HepG2 (cell line): ENCODE measurements at regions of chr5 and their contacts with region 1.

Region 1: DNA sequence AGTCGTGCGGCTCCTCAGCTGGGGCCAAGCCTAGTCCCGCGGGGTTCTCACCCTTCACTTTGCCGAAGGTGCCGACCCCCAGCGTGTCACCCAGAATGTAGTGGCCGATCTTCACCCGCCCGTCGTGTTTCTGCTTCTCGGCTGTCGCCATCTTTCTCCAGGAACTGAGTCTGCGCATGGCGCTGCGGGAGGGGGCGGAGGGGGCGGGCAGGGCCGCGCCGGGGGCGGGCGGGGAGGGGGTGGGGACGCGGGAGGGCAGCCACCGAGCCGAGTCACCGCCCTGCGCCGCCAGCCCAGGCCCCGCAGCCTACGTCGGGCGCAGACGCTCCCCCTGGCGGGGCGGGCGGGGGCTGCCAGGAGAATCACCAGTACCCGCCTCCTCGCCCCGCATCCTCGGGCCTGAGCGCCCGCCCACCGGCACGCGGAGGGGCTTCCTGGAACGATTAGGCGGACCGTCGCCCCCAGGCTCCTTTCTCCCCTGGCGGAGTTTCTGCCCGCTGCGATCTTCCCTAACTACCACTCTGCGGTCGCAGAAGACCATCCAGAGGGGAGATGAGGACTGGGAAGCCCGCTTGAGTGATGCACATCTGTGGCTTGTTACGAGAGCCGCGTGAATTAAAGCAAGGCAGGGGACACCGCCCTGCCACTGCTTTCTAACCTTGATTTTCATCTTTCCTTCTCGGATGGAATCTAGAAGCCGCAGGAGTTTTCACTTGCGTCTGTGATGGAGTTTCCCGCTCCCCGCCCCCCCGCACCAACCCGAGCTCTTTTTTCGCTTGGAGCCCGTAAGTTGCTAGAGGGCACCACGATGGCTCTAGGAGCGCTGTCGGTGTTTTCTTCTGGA is at the start of gene PRKAA1:
- DNase-seq: peak; percentile 71
- ATAC-seq: peak; percentile 95
- H3K4me3 ChIP-seq: peak within 1 kb of the TSS; percentile 94 to 98 (median 96)
- H3K27ac ChIP-seq: peak within 1 kb of the TSS; percentile 93
- H3K4me1 ChIP-seq: peaks cover 63% of the 10 kb centered on the region
- H3K27me3 ChIP-seq: no peaks in the 10 kb centered on the region; a peak in 1 of 5 replicates
- CTCF ChIP-seq: peak; percentile 80
- EP300 ChIP-seq: peak in 1 of 2 experiments; percentile 24; a peak in 2 of 4 replicates
- POLR2A ChIP-seq: peak; percentile 80 to 86
- RAD21 ChIP-seq: peak; percentile 73; the same call in 1 of the 2 replicates
- total RNA-seq, gene PRKAA1: 58.0 and 78.7 TPM in 2 replicates

Region 2: GRCh38 chr5:40755407-40756365 is 42.5 kb before region 1 on chr5 and contains the start of gene TTC33:
- CTCF ChIA-PET with region 1: interaction called, 19 read pairs
- POLR2A ChIA-PET with region 1: no interaction called
- in situ Hi-C with region 1: no loop called
- intact Hi-C with region 1: loop called (anchors 1 kb)
- DNase-seq: peak; percentile 91
- ATAC-seq: peak; percentile 97
- H3K4me3 ChIP-seq: peak within 1 kb of the TSS; percentile 65 to 94 (median 86)
- H3K27ac ChIP-seq: peak within 1 kb of the TSS; percentile 70
- H3K4me1 ChIP-seq: peaks cover 21% of the 10 kb centered on the region
- H3K27me3 ChIP-seq: no peaks in the 10 kb centered on the region; a peak in 1 of 5 replicates
- CTCF ChIP-seq: peak; percentile 96
- EP300 ChIP-seq: no peak
- POLR2A ChIP-seq: peak; percentile 34 to 37; a peak in 3 of 4 replicates
- RAD21 ChIP-seq: peak; percentile 80
- total RNA-seq, gene TTC33: 20.0 and 37.9 TPM in 2 replicates

Region 3: GRCh38 chr5:40823459-40823858 is 25.2 kb after region 1 on chr5:
- CTCF ChIA-PET with region 1: no interaction called
- POLR2A ChIA-PET with region 1: interaction called, 6 read pairs
- in situ Hi-C with region 1: no loop called
- intact Hi-C with region 1: loop called (anchors 2 kb)
- DNase-seq: no peak
- ATAC-seq: peak; percentile 60
- H3K4me3 ChIP-seq: no peak overlapping the region
- H3K27ac ChIP-seq: no peak overlapping the region
- H3K4me1 ChIP-seq: no peaks in the 10 kb centered on the region
- H3K27me3 ChIP-seq: no peaks in the 10 kb centered on the region
- CTCF ChIP-seq: no peak
- EP300 ChIP-seq: no peak
- POLR2A ChIP-seq: no peak
- RAD21 ChIP-seq: no peak

Region 4: DNA sequence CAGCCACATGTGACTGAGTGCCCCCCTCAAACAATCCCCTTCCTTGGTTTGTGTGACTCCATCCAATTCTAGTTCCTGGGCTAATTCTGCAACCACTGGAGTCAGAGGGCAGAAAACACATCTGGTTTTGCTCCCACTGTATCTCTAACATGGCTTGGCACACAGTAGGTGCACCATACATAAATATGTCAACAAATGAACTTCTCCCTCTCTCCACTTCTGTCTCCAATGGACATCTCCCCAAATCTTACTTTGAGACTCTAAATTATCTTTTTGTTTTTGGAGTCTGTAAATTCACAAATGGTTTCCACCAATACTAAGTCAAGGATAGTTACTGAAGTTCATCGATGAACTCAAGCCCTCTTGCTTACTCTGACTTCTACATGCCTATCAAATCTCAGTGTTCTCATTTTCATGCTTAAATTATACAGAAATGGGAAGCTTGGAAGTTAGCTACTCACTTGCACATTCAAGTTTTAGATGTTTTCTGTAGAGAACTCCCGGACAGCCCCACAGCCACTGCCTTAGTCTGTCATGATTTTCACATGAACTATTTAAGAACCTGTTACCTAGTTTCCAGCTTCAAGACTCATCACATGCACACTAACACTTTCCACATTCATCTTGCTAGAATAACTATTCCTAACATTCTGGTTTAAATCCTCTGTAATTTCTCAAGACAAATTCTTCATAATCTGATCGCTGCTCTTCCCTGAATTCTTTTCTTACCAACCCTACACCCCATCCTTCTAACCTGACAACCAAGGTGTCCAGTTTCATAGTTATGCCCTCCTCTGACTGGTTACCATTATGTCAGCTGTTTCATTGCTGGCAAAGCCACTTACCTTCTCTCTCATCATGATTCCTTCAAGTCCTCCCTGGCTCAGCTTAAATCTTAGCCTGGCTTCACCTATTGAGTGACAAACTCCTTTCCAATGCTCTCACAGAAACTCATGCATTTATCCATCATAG is 30.7 kb after region 1 on chr5:
- CTCF ChIA-PET with region 1: no interaction called
- POLR2A ChIA-PET with region 1: interaction called, 11 read pairs
- in situ Hi-C with region 1: no loop called
- intact Hi-C with region 1: loop called (anchors 1 kb)
- DNase-seq: no peak
- ATAC-seq: no peak
- H3K4me3 ChIP-seq: no peak overlapping the region
- H3K27ac ChIP-seq: peak overlapping the region; percentile 0
- H3K4me1 ChIP-seq: peaks cover 42% of the 10 kb centered on the region
- H3K27me3 ChIP-seq: no peaks in the 10 kb centered on the region
- CTCF ChIP-seq: no peak
- EP300 ChIP-seq: no peak
- POLR2A ChIP-seq: peak in 1 of 2 experiments; percentile 57; a peak in 2 of 4 replicates
- RAD21 ChIP-seq: no peak

Region 5: GRCh38 chr5:40834849-40835787 is 36.9 kb after region 1 on chr5 and contains the start of gene RPL37:
- CTCF ChIA-PET with region 1: no interaction called
- POLR2A ChIA-PET with region 1: interaction called, 11 read pairs
- in situ Hi-C with region 1: no loop called
- intact Hi-C with region 1: loop called (anchors 1 kb)
- DNase-seq: peak; percentile 94
- ATAC-seq: peak; percentile 98
- H3K4me3 ChIP-seq: peak within 1 kb of the TSS; percentile 61 to 82 (median 82)
- H3K27ac ChIP-seq: peak within 1 kb of the TSS; percentile 84
- H3K4me1 ChIP-seq: peaks cover 46% of the 10 kb centered on the region
- H3K27me3 ChIP-seq: no peaks in the 10 kb centered on the region; a peak in 1 of 5 replicates
- CTCF ChIP-seq: peak; percentile 48
- EP300 ChIP-seq: peak in 1 of 2 experiments; percentile 27; a peak in 1 of 4 replicates
- POLR2A ChIP-seq: peak; percentile 98 to 99
- RAD21 ChIP-seq: no peak; the same call in 1 of the 2 replicates
- total RNA-seq, gene RPL37: 1,981 and 2,192 TPM in 2 replicates